ENCODE measurements at regions of chr12 and their contacts with region 1.

Region 1: DNA sequence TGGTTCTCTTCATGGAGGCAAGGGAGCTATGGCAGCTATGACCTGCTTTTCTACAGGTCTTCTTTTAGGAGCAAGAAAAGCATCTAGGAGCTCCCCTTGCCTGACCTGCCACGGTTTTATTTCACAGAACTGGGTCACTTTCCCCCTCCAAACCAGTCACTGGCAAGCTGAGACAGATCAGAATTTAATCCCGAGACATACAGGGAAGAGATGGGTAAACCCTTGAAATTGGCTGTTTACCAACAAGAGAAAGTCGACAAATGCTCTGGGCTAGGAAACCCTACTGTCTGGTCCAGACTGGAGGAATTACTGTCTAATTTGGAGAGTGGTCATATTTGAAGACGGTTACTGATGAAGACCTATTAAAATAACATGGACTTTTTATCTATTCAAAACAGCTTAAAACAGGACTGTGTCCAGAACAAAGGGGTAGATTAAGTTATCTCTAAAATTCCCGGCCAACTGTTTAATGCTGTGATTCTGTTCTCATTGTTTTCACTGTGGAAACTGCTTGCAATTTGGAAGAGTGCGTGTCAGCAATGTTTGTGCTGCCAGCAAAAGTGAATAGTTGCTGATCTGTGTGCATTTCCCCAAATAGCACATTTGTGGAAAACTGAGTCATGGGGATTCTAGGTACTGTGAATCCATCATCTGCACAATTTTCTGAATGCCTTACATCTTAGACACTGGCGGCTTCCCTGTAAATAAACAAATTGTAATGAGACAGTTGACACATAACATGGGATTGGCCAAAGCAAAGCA is 73.4 kb upstream of the EEA1 start:
- DNase-seq: peak; percentile 87
- H3K4me3 ChIP-seq: no peak overlapping the region
- H3K27ac ChIP-seq: peak overlapping the region; percentile 75
- H3K27me3 ChIP-seq: no peaks in the 10 kb centered on the region
- CTCF ChIP-seq: no peak

Region 2: GRCh38 chr12:93378373-93379325 is 376.2 kb after region 1 on chr12:
- in situ Hi-C with region 1: loop called (anchors 25 kb)
- DNase-seq: peak; percentile 59
- H3K4me3 ChIP-seq: peak overlapping the region; percentile 88
- H3K27ac ChIP-seq: peak overlapping the region; percentile 84
- H3K27me3 ChIP-seq: no peaks in the 10 kb centered on the region
- CTCF ChIP-seq: no peak